ENCODE measurements at regions of chr13 and their contacts with region 1.

Region 1: DNA sequence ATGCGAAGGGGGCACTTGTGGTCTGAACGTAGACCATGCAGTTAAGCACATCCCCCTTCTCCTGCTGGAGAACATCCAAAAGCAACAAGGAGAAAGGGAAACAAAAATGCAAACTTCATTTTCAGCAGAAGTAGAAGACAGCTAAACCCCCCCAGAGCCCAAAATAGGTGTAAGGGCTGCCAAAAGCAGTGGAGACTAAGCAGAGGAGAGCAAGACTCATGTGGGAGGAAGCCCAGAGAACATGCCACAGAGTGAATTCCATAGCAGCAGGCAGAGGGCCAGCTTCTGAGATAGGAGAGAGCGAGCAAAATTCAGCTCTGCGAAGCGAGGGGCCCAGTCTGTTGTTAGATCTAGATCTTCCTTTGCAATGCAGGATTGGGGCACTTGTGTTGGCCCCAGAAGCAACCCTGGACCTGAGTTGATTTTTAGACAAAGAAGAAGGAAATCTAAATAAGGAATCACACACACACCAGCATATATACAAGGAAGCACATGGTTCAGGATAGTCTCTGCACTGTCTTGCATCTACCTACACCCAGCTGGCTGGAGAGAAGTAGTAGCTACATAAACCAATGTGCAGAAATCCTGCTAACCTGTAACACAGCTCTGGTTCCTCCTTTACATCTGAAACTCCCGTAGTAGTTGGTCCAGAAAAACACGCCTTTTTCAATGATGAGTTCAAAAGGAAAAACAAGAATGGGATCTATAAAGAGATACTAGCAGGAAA is 199.6 kb downstream of the SPRY2 start:
- DNase-seq: peak; percentile 66 to 84 (median 80)
- ATAC-seq: peak; percentile 95 to 96
- H3K4me3 ChIP-seq: no peak overlapping the region
- H3K27ac ChIP-seq: peak overlapping the region; percentile 1
- H3K4me1 ChIP-seq: no peaks in the 10 kb centered on the region
- H3K27me3 ChIP-seq: no peaks in the 10 kb centered on the region

Region 2: DNA sequence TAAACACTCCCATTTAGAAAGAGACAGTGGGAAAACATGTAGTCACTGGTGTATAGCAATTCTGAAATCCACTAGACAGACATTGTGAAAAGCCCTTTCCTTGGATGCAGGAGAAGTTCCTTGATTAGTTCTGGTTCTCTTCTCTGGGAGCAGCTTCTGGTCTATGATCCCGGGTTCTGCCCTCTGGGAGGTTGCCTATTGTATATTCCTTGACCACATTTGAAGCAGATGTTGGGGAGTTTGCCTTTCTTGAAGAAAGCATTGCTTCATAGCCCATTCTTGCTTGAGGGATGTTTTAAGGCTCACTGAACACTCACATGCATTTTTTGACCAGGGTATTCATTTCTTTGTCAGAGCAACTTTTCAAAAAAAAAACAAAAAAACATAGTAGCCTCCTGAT is 448.4 kb before region 1 on chr13:
- intact Hi-C with region 1: loop called in 1 of 4 experiments (anchors 10 kb)
- DNase-seq: no peak
- ATAC-seq: no peak
- H3K4me3 ChIP-seq: no peak overlapping the region
- H3K27ac ChIP-seq: no peak overlapping the region
- H3K4me1 ChIP-seq: no peaks in the 10 kb centered on the region
- H3K27me3 ChIP-seq: no peaks in the 10 kb centered on the region

Region 3: DNA sequence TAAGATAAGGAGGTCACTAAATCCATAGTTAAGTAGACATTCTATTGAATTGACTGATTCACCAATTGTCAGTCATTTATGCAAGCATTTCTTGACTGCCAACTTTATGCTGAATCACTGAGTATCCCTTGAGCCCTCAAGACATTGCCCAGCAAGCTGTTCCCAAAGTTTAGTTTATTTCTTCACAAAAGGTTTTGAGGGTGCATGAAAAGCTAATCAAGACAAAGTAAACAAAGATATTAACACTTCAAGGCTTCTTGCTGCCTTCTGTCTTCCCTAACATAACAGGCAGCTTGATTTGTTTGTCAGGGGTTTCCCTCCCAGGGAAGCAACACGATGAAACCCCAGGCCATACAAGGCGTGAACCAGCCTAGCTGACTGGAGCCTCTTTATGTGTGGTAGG is 174.8 kb before region 1 on chr13:
- intact Hi-C with region 1: no loop called
- DNase-seq: no peak
- ATAC-seq: no peak
- H3K4me3 ChIP-seq: no peak overlapping the region
- H3K27ac ChIP-seq: no peak overlapping the region
- H3K4me1 ChIP-seq: no peaks in the 10 kb centered on the region
- H3K27me3 ChIP-seq: no peaks in the 10 kb centered on the region